ENCODE measurements at regions of chr3 and their contacts with region 1.

Region 1: DNA sequence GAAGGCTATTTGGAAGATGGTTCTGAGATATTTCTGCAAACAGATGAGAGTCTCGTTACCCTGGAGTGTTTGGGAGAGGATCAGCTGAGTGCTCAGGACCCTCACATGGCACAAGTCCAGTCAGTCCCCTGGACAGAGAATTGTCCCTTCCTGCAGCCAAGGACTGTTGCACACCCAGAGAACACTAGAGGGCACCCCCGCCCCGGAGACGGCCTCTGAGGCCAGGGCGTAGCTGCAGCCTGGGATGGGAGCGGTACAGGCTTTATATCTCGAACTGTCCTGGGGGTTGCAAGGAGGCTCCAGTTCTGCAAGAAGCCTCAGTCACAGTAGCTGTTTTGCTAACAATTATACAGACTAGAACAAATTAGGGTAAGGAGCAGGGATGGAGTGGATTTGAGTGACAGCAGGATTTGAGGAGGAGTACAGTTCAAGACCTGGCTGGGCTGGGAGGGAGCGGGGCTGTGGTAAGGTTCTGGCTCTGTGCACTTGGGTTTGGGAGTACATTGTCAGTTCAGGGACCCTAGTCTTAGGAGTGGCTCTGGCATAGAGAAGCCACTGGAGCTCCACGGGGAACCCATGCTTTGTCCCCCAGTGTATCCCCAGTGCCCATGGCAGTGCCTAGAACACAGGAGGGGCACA is 67.6 kb upstream of the HACD2 start:
- DNase-seq: peak; percentile 89
- H3K4me3 ChIP-seq: no peak overlapping the region
- H3K27ac ChIP-seq: peak overlapping the region; percentile 66 to 81
- H3K4me1 ChIP-seq: peaks cover 16 to 18% of the 10 kb centered on the region in 2 experiments; a peak in 3 of 4 replicates
- H3K27me3 ChIP-seq: no peaks in the 10 kb centered on the region
- CTCF ChIP-seq: peak; percentile 95
- EP300 ChIP-seq: no peak
- RAD21 ChIP-seq: peak; percentile 98

Region 2: DNA sequence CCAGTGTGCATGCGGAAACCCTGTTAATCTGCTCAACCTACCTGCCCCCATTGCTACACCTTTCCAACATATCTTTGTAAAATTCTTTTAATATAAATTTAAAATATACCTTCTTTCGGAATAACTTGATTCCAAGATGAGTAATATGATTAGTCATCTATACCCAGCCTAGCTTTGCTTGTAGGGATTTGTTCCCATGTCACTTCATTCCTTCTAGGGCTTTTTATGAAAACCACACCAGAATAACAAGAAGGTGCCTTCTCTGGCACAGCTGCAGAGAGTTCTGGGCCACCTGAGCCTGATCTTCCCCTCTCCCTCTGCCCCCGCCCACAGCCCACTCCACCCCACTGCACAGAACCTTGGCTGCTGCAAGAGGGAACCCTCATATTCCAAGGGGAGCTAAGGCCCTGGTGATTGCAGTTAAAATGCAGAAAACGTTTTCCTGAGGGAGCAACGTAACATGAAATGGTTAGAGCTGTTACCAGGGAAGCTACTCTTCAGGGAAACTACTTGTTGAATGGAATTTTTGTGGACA is 29.1 kb before region 1 on chr3:
- CTCF ChIA-PET with region 1: interaction called, 10 read pairs
- POLR2A ChIA-PET with region 1: no interaction called
- DNase-seq: no peak
- H3K4me3 ChIP-seq: no peak overlapping the region
- H3K27ac ChIP-seq: peak overlapping the region in 1 of 2 experiments; percentile 14; a peak in 1 of 4 replicates
- H3K4me1 ChIP-seq: peaks cover 8 to 27% of the 10 kb centered on the region in 2 experiments; a peak in 3 of 4 replicates
- H3K27me3 ChIP-seq: no peaks in the 10 kb centered on the region
- CTCF ChIP-seq: no peak
- EP300 ChIP-seq: no peak
- RAD21 ChIP-seq: no peak

Region 3: DNA sequence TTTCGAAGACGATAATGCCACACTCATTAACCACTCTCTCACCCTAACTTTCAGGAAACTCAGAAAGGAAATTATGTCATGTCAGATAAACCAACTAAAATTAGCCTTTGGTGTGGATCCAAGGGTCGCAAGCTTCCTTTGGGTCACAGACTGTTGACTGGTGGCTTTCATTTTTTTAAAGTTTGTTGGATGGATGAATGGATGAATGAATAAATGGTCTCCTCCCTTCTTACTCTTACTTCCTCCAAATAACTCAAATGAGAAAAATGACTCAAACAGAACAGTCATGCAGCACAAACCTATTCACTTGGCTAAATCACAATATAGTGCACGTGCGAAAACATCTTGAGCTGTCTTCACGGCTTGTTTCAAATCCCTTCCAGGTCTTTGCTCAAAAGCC is 15.3 kb after region 1 on chr3:
- CTCF ChIA-PET with region 1: interaction called, 38 read pairs
- POLR2A ChIA-PET with region 1: no interaction called
- DNase-seq: no peak
- H3K4me3 ChIP-seq: no peak overlapping the region
- H3K27ac ChIP-seq: peak overlapping the region in 1 of 2 experiments; percentile 33; a peak in 2 of 4 replicates
- H3K4me1 ChIP-seq: peaks cover 8 to 12% of the 10 kb centered on the region in 2 experiments; a peak in 2 of 4 replicates
- H3K27me3 ChIP-seq: no peaks in the 10 kb centered on the region
- CTCF ChIP-seq: no peak
- EP300 ChIP-seq: no peak
- RAD21 ChIP-seq: no peak

Region 4: GRCh38 chr3:123688241-123688747 is 35.8 kb after region 1 on chr3:
- CTCF ChIA-PET with region 1: interaction called, 48 read pairs
- POLR2A ChIA-PET with region 1: no interaction called
- DNase-seq: no peak
- H3K4me3 ChIP-seq: no peak overlapping the region
- H3K27ac ChIP-seq: peak overlapping the region; percentile 31 to 87; a peak in 3 of 4 replicates
- H3K4me1 ChIP-seq: peaks cover 14 to 55% of the 10 kb centered on the region in 2 experiments; a peak in 3 of 4 replicates
- H3K27me3 ChIP-seq: no peaks in the 10 kb centered on the region
- CTCF ChIP-seq: no peak
- EP300 ChIP-seq: peak in 1 of 2 experiments; percentile 97; a peak in 2 of 4 replicates
- RAD21 ChIP-seq: no peak

Region 5: GRCh38 chr3:123700791-123701722 is 48.6 kb after region 1 on chr3:
- CTCF ChIA-PET with region 1: interaction called, 129 read pairs
- POLR2A ChIA-PET with region 1: no interaction called
- DNase-seq: no peak
- H3K4me3 ChIP-seq: no peak overlapping the region
- H3K27ac ChIP-seq: no peak overlapping the region
- H3K4me1 ChIP-seq: peaks cover 8 to 19% of the 10 kb centered on the region in 2 experiments; a peak in 2 of 4 replicates
- H3K27me3 ChIP-seq: no peaks in the 10 kb centered on the region
- CTCF ChIP-seq: no peak
- EP300 ChIP-seq: no peak
- RAD21 ChIP-seq: no peak

Region 6: GRCh38 chr3:123723522-123724168 is 71.2 kb after region 1 on chr3:
- CTCF ChIA-PET with region 1: interaction called, 123 read pairs
- POLR2A ChIA-PET with region 1: interaction called, 3 read pairs
- DNase-seq: peak; percentile 67
- H3K4me3 ChIP-seq: no peak overlapping the region; a peak in 1 of 4 replicates
- H3K27ac ChIP-seq: peak overlapping the region; percentile 44 to 64; a peak in 3 of 4 replicates
- H3K4me1 ChIP-seq: peaks cover 23 to 41% of the 10 kb centered on the region in 2 experiments; a peak in 3 of 4 replicates
- H3K27me3 ChIP-seq: no peaks in the 10 kb centered on the region
- CTCF ChIP-seq: peak; percentile 87
- EP300 ChIP-seq: no peak
- RAD21 ChIP-seq: peak; percentile 69